ENCODE measurements at regions of chr12 and their contacts with region 1.

Region 1: DNA sequence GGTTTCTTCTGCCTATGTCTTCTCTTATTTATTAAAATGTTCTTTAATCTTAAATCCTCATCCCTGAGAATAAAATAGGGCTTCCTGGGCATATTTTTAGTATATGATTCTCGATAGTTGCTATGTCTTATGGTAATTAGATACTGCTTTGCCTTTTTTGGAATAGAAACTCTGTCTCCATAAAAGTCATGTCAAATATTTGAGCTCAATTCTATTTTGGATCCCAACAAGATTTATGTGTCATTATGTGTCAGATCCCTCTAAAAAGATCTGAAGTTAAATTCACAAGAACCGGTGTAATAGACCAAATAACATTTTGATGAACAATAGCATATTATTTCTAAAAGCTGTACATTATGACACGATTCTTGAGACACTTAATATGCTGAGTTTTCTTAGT is 312.5 kb upstream of the PDE3A start:
- DNase-seq: no peak
- H3K4me3 ChIP-seq: no peak overlapping the region
- H3K27ac ChIP-seq: peak overlapping the region in 1 of 2 donors; percentile 30
- H3K4me1 ChIP-seq: no peaks in the 10 kb centered on the region
- H3K27me3 ChIP-seq: no peaks in the 10 kb centered on the region
- CTCF ChIP-seq: no peak
- POLR2A ChIP-seq: no peak

Region 2: DNA sequence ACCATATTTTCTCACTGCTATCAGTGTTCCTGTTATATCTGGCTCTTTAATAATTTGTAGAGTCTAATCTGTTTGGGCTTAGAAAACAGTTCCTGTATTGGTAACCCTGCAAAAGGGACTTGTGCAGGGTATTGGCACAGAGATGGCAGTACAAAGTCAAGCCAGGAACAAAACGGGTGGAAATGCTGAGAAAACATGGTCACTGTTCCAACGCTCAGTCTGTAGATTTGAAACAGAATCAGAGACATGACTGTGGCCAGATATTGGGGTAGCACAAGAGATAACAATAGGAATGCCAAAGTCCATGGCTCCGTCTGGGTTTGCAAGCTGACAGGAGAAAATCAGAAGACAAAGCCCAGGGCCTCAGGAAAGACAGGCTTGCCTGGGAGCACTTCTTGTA is 21.8 kb after region 1 on chr12:
- intact Hi-C with region 1: loop called (anchors 2 kb)
- DNase-seq: no peak
- H3K4me3 ChIP-seq: no peak overlapping the region
- H3K27ac ChIP-seq: no peak overlapping the region
- H3K4me1 ChIP-seq: no peaks in the 10 kb centered on the region
- H3K27me3 ChIP-seq: no peaks in the 10 kb centered on the region
- CTCF ChIP-seq: no peak
- POLR2A ChIP-seq: no peak

Region 3: DNA sequence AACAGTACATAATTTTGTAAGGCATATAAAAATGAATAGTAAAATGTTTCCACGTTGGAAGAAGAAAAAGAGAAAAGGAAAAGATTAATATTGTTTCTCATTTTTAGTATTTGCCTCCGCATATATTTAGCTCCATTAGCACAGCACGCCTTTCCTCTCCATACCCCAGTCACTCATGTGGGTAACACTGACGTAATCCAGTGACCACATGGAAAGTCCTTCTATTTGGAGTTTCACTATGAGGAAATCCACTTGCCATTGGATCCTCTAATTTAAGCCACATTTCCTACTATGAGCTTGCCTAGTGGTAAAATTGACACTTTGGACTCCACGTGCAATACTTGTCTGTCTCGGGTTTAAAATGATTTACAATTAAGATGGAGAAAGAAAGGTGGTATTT is 1284.5 kb after region 1 on chr12:
- intact Hi-C with region 1: no loop called
- DNase-seq: no peak
- H3K4me3 ChIP-seq: no peak overlapping the region
- H3K27ac ChIP-seq: no peak overlapping the region
- H3K4me1 ChIP-seq: no peaks in the 10 kb centered on the region
- H3K27me3 ChIP-seq: no peaks in the 10 kb centered on the region
- CTCF ChIP-seq: no peak
- POLR2A ChIP-seq: no peak